ENCODE measurements at regions of chr12 and their contacts with region 1.

Region 1: GRCh38 chr12:9647825-9648700 is 21.4 kb upstream of the CLEC2D start:
- DNase-seq: peak; percentile 93 to 94
- H3K4me3 ChIP-seq: peak overlapping the region; percentile 51
- H3K4me3 Mint-ChIP-seq: peak overlapping the region; percentile 98
- H3K27ac Mint-ChIP-seq: peak overlapping the region; percentile 96
- H3K4me1 ChIP-seq: peaks cover 24% of the 10 kb centered on the region
- H3K4me1 Mint-ChIP-seq: peaks cover 40% of the 10 kb centered on the region
- H3K27me3 ChIP-seq: no peaks in the 10 kb centered on the region
- H3K27me3 Mint-ChIP-seq: no peaks in the 10 kb centered on the region
- CTCF ChIP-seq: no peak

Region 2: DNA sequence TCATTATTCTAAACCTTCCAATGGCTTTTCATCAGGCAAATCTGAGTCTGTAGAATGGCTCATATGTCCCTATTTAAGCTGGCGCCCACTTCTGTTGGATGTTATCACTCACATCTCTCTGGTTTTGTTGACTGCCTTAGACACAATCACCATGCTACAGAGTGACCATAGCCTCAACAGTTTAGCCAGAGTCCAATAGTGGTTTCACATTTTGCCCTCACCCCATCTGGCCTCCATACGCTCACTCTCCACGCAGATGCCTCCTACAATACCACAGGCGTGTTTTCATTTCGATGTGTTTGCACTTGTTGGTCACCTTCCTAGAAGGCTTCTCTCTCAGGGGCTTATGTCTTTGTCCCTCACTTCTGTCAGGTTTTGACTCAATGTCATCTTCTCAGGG is 43.8 kb before region 1 on chr12:
- CTCF ChIA-PET with region 1: no interaction called
- POLR2A ChIA-PET with region 1: no interaction called
- intact Hi-C with region 1: loop called (anchors 2 kb)
- DNase-seq: no peak
- H3K4me3 ChIP-seq: no peak overlapping the region
- H3K4me3 Mint-ChIP-seq: no peak overlapping the region
- H3K27ac Mint-ChIP-seq: no peak overlapping the region
- H3K4me1 ChIP-seq: peaks cover 20% of the 10 kb centered on the region
- H3K4me1 Mint-ChIP-seq: peaks cover 21% of the 10 kb centered on the region
- H3K27me3 ChIP-seq: no peaks in the 10 kb centered on the region
- H3K27me3 Mint-ChIP-seq: no peaks in the 10 kb centered on the region
- CTCF ChIP-seq: no peak

Region 3: GRCh38 chr12:9694241-9694640 is 46.2 kb after region 1 on chr12:
- CTCF ChIA-PET with region 1: no interaction called
- POLR2A ChIA-PET with region 1: no interaction called
- intact Hi-C with region 1: no loop called
- DNase-seq: no peak
- H3K4me3 ChIP-seq: no peak overlapping the region
- H3K4me3 Mint-ChIP-seq: no peak overlapping the region
- H3K27ac Mint-ChIP-seq: no peak overlapping the region
- H3K4me1 ChIP-seq: no peaks in the 10 kb centered on the region
- H3K4me1 Mint-ChIP-seq: no peaks in the 10 kb centered on the region
- H3K27me3 ChIP-seq: no peaks in the 10 kb centered on the region
- H3K27me3 Mint-ChIP-seq: no peaks in the 10 kb centered on the region
- CTCF ChIP-seq: no peak